ENCODE measurements at regions of chr1 and their contacts with region 1.

Region 1: DNA sequence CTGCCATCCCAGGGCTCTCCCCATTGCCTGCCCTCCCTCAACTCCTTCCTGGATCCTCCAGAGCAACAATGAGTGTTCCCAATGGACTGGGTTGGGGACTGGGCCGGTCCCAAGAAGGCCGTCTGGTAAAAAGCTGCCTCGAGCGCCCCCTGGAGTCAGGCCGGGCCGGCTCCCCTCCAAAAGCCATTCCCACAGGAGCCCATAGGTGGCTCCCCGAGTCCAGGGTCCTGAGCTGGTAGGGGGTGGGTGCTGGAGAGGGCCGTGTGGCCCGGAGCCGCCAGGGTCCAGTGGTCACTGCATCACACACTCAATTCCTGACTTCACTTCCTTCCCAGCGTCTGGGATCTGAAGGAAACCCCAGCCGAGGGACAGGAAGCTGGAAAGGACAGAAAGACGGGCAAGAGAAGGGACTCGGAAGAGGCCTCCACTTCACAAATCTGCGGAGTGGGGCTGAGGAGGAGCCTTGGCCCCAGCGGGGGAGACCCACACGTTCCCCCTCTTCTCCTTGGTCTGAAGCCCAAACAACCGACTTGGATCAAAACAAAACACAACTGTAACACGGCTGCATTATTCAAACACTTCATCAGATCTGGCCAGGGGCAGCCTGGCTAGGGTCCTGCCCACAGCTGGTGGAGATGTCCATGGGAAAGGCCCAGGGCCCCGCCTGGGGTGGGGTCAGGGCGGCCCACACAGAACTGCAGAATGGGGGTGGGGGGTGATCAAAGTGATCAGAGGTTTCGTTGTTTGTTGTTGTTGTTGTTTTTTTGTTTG is 10.9 kb upstream of the ALDH4A1 start:
- DNase-seq: peak; percentile 56 to 87 (median 70)
- ATAC-seq: peak; percentile 86
- H3K4me3 ChIP-seq: no peak overlapping the region
- H3K4me3 Mint-ChIP-seq: no peak overlapping the region
- H3K27ac ChIP-seq: no peak overlapping the region
- H3K27ac Mint-ChIP-seq: peak overlapping the region; percentile 16
- H3K4me1 ChIP-seq: peaks cover 14% of the 10 kb centered on the region
- H3K4me1 Mint-ChIP-seq: peaks cover 6% of the 10 kb centered on the region
- H3K27me3 ChIP-seq: no peaks in the 10 kb centered on the region
- H3K27me3 Mint-ChIP-seq: no peaks in the 10 kb centered on the region
- CTCF ChIP-seq: peak; percentile 95

Region 2: GRCh38 chr1:18926315-18927081 is 13.2 kb after region 1 on chr1:
- CTCF ChIA-PET with region 1: interaction called, 53 read pairs
- POLR2A ChIA-PET with region 1: interaction called, 7 read pairs
- intact Hi-C with region 1: no loop called
- DNase-seq: peak; percentile 61 to 94 (median 80)
- ATAC-seq: peak; percentile 82
- H3K4me3 ChIP-seq: peak overlapping the region; percentile 49
- H3K4me3 Mint-ChIP-seq: peak overlapping the region; percentile 52
- H3K27ac ChIP-seq: peak overlapping the region; percentile 87 to 91
- H3K27ac Mint-ChIP-seq: peak overlapping the region; percentile 83
- H3K4me1 ChIP-seq: peaks cover 97% of the 10 kb centered on the region
- H3K4me1 Mint-ChIP-seq: peaks cover 93% of the 10 kb centered on the region
- H3K27me3 ChIP-seq: no peaks in the 10 kb centered on the region
- H3K27me3 Mint-ChIP-seq: no peaks in the 10 kb centered on the region
- CTCF ChIP-seq: no peak

Region 3: DNA sequence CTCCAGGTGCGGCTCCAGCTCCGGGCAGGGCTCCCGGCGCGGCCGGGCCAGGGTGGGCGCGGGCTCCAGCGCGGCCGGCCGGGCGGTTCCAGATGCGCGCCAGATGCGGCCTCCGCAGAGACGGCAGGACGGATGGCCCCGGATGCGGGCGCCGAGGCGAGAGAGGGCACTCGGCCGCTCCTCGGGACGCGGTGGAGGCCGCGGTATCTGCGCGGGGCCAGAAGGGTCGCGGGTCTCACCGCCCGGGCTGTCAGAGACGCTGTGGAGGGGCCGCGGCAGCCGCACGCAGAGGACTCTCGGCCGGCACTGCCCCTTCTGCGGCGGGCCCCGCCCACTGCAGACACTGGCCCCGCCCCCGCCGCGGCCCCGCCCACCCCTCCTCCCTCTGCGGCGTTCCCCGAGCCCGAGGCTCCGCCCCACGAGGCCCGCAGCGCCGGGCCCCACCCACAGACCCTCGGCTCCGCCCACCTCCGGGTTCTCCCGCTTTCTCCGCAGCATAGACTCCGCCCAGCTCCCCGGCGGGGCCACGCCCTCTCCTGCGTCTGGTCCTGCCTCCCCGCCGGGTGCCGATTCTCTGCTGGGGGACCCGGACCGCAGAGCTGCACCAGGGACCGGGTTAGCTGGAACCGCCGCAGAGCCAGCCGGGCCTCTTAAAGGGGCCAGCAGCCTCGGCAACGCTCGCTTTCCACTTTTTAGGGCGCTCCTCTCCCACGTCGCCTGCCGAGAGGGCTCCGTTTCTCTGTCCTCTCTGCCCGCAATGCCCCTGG is 43.3 kb after region 1 on chr1 and contains the start of gene IFFO2:
- CTCF ChIA-PET with region 1: interaction called, 29 read pairs
- POLR2A ChIA-PET with region 1: interaction called, 27 read pairs
- intact Hi-C with region 1: no loop called
- DNase-seq: peak in 13 of 14 experiments; percentile 97 to 100 (median 98)
- ATAC-seq: peak; percentile 76
- H3K4me3 ChIP-seq: peak within 1 kb of the TSS; percentile 83
- H3K4me3 Mint-ChIP-seq: peak within 1 kb of the TSS; percentile 99
- H3K27ac ChIP-seq: peak within 1 kb of the TSS in 1 of 2 donors; percentile 74
- H3K27ac Mint-ChIP-seq: peak within 1 kb of the TSS; percentile 99
- H3K4me1 ChIP-seq: peaks cover 59% of the 10 kb centered on the region
- H3K4me1 Mint-ChIP-seq: peaks cover 65% of the 10 kb centered on the region
- H3K27me3 ChIP-seq: no peaks in the 10 kb centered on the region
- H3K27me3 Mint-ChIP-seq: no peaks in the 10 kb centered on the region
- CTCF ChIP-seq: no peak
- total RNA-seq, gene IFFO2: 106 to 112 TPM

Region 4: GRCh38 chr1:18972531-18972930 is 59.3 kb after region 1 on chr1:
- CTCF ChIA-PET with region 1: interaction called, 60 read pairs
- POLR2A ChIA-PET with region 1: interaction called, 9 read pairs
- intact Hi-C with region 1: loop called in 1 of 2 experiments (anchors 1 kb)
- DNase-seq: peak in 5 of 14 experiments; percentile 23 to 73 (median 66)
- ATAC-seq: peak; percentile 59
- H3K4me3 ChIP-seq: no peak overlapping the region
- H3K4me3 Mint-ChIP-seq: no peak overlapping the region
- H3K27ac ChIP-seq: no peak overlapping the region
- H3K27ac Mint-ChIP-seq: no peak overlapping the region
- H3K4me1 ChIP-seq: peaks cover 3% of the 10 kb centered on the region
- H3K4me1 Mint-ChIP-seq: no peaks in the 10 kb centered on the region
- H3K27me3 ChIP-seq: no peaks in the 10 kb centered on the region
- H3K27me3 Mint-ChIP-seq: no peaks in the 10 kb centered on the region
- CTCF ChIP-seq: peak; percentile 72

Region 5: GRCh38 chr1:19113697-19114092 is 200.4 kb after region 1 on chr1:
- CTCF ChIA-PET with region 1: no interaction called
- POLR2A ChIA-PET with region 1: no interaction called
- intact Hi-C with region 1: loop called in 1 of 2 experiments (anchors 1 kb)
- DNase-seq: peak in 13 of 14 experiments; percentile 10 to 60 (median 21)
- ATAC-seq: peak; percentile 74
- H3K4me3 ChIP-seq: no peak overlapping the region
- H3K4me3 Mint-ChIP-seq: no peak overlapping the region
- H3K27ac ChIP-seq: no peak overlapping the region
- H3K27ac Mint-ChIP-seq: no peak overlapping the region
- H3K4me1 ChIP-seq: no peaks in the 10 kb centered on the region
- H3K4me1 Mint-ChIP-seq: no peaks in the 10 kb centered on the region
- H3K27me3 ChIP-seq: no peaks in the 10 kb centered on the region
- H3K27me3 Mint-ChIP-seq: no peaks in the 10 kb centered on the region
- CTCF ChIP-seq: peak; percentile 36

Measured in CD4-positive, alpha-beta T cell (primary cell).